Activated T-helper 1 cell treated with anti-CD3 and anti-CD28 coated beads, Interleukin-12 subunit alpha, Interleukin-12 subunit beta, Interleukin-2, Interleukin-4 antibody, amounts not matched to agents 30 ng/mL and 10 ng/mL and 1 ng/mL, durations not matched to agents 14 hours and 24 hours and 36 hours (primary cell): ENCODE measurements at regions of chr2 and their contacts with region 1.

Region 1: DNA sequence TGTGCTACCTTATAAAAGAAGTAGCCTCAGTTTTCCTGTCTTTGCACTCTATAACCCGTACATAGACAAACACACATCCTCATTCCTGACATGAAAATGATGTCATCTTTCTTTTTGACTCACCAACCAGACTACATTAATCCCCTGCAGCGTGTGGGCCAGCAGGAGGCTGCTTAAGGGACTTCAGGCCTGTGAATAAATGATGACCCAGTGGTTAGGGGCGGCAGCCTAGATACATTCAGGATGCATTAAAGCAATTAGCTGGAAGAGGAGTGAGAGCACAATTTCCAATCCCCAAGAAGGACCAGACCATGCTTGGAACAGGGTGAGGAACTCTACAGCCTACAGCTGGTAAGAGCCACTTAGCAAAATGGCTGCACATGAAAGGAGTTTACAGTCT is 57.3 kb upstream of the KLF7 start:
- DNase-seq: no peak
- H3K4me3 Mint-ChIP-seq: peak overlapping the region; percentile 60
- H3K27ac Mint-ChIP-seq: peak overlapping the region; percentile 84
- H3K4me1 Mint-ChIP-seq: peaks cover 46% of the 10 kb centered on the region
- H3K27me3 Mint-ChIP-seq: peaks cover 6% of the 10 kb centered on the region

Region 2: GRCh38 chr2:206800506-206801417 is 422.3 kb before region 1 on chr2:
- intact Hi-C with region 1: loop called (anchors 5 kb)
- DNase-seq: peak; percentile 28
- H3K4me3 Mint-ChIP-seq: peak overlapping the region; percentile 49
- H3K27ac Mint-ChIP-seq: peak overlapping the region; percentile 61
- H3K4me1 Mint-ChIP-seq: peaks cover 20% of the 10 kb centered on the region
- H3K27me3 Mint-ChIP-seq: no peaks in the 10 kb centered on the region

Region 3: DNA sequence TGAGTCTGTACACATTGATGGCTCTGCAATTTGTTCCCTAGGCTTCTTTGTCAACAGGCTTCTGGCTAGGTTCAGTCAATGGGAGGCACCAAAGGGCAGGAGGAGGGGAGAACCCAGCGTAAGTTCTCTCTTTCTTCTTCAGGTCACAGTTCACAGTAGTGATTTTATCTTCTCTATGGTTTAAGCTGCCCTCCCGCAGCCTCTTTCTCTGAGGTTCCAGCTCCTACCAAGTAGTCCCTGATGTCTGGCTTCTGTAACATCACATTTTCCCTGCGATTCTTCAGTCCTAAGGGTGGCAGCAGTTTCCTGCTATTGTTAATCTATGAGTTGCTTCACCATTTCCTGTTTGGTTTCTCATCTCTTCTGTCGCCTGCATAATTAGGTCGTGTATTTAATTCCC is 176.3 kb before region 1 on chr2:
- intact Hi-C with region 1: loop called (anchors 2 kb)
- DNase-seq: peak; percentile 6
- H3K4me3 Mint-ChIP-seq: no peak overlapping the region
- H3K27ac Mint-ChIP-seq: no peak overlapping the region
- H3K4me1 Mint-ChIP-seq: peaks cover 15% of the 10 kb centered on the region
- H3K27me3 Mint-ChIP-seq: peaks cover 2% of the 10 kb centered on the region

Region 4: DNA sequence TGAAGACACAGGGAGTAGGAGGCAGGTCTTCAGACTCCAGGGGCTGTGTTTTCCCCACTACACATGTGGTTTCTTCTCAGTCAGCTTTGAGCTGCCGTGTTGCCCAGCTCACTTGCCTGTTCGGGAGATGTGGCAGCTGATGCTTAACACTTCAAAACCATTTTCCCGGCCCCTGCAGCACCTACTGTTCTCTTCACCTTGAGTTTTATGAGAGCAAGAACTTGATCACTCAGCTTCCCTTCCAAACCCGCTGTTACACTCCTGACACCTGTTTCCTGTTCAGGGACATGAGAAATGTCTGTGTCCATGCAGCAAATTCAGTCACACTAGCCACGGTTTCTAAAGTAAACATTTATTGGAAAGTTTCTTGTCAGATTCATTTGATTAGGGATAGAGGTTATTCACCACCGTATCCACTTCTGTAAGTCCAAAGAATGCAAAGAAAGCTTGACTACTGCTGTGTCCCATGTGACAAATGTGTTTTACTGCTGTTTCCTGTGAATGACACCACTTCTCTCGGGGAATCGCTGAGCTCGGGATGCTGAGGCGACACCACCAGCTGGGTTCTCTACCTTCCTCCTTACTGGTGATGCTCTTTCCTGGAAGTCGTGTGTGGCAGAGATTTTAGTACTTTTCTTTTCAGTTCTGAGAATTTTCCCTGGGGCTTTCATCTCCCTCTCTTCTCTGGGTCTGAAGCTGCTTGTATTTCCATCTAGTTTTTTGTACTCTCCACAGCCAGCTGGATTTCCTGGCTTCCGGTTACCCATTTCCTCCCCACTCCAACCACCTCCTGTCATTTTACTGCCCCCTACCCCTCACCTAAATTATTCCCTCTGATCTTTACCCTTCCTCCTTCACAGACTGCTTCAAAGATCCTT is 149.0 kb before region 1 on chr2:
- intact Hi-C with region 1: loop called (anchors 2 kb)
- DNase-seq: peak; percentile 39
- H3K4me3 Mint-ChIP-seq: peak overlapping the region; percentile 71
- H3K27ac Mint-ChIP-seq: peak overlapping the region; percentile 79
- H3K4me1 Mint-ChIP-seq: peaks cover 46% of the 10 kb centered on the region
- H3K27me3 Mint-ChIP-seq: no peaks in the 10 kb centered on the region

Region 5: DNA sequence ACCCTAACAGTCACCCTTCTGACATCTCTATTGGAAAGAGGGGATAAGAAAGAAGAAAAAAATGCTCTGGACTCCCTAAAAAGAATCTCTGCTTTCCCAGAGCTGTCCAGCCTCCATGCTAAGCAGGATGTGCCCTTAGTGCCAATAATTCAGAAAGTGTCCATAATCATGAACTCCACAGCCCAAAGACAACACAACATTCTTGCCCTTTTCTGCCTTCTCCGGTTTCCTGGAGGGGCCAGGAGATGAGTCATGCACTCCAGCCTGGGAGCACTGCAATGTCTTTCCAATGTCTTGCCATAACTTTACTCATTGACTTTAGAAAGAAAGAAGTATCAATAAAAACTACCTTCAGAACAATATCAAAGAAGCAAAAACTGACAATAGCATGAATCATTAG is 101.3 kb before region 1 on chr2:
- intact Hi-C with region 1: loop called (anchors 1 kb)
- DNase-seq: no peak
- H3K4me3 Mint-ChIP-seq: no peak overlapping the region
- H3K27ac Mint-ChIP-seq: no peak overlapping the region
- H3K4me1 Mint-ChIP-seq: peaks cover 46% of the 10 kb centered on the region
- H3K27me3 Mint-ChIP-seq: no peaks in the 10 kb centered on the region

Region 6: DNA sequence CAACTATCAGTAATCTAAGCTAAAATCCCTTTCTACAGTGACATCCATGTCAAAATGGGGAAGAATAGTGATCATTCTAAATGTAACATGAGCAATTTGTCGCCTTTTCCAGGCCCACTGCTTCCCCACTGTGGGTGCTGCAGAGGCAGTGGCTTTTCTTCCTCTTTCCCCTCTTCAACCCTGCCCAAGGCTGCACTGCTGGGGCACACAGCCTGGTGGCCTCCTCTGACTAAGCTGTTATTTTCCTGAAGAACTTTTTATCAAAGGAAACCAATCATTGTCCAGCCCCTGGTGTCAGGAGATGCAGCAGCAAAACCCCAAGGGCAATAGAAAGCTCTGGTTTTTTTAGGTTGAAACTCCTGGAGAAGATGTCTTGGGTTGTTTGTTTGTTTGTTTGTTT is 60.3 kb after region 1 on chr2:
- intact Hi-C with region 1: loop called (anchors 1 kb)
- DNase-seq: no peak
- H3K4me3 Mint-ChIP-seq: peak overlapping the region; percentile 53
- H3K27ac Mint-ChIP-seq: peak overlapping the region; percentile 85
- H3K4me1 Mint-ChIP-seq: peaks cover 76% of the 10 kb centered on the region
- H3K27me3 Mint-ChIP-seq: no peaks in the 10 kb centered on the region

Region 7: DNA sequence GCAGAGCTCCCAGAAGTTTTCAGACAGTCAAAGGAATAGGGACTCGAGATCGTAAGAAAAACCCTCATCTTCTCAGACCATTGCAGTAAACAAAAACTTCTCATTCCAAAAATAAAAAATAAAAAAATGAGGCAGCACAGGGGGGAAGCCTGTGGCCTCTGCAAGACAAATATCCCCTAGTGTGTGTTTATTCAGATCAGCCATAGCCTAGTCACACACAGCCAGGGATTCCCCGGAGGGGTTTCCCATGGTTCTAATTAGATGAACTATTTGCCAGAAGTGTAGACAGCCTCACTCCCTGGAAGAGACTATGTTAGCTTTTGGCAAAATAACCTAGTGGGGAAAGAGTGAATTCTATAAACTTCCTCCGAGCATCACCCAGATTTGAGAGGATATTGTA is 65.6 kb after region 1 on chr2:
- intact Hi-C with region 1: loop called (anchors 2 kb)
- DNase-seq: no peak
- H3K4me3 Mint-ChIP-seq: no peak overlapping the region
- H3K27ac Mint-ChIP-seq: no peak overlapping the region
- H3K4me1 Mint-ChIP-seq: peaks cover 77% of the 10 kb centered on the region
- H3K27me3 Mint-ChIP-seq: no peaks in the 10 kb centered on the region

Region 8: DNA sequence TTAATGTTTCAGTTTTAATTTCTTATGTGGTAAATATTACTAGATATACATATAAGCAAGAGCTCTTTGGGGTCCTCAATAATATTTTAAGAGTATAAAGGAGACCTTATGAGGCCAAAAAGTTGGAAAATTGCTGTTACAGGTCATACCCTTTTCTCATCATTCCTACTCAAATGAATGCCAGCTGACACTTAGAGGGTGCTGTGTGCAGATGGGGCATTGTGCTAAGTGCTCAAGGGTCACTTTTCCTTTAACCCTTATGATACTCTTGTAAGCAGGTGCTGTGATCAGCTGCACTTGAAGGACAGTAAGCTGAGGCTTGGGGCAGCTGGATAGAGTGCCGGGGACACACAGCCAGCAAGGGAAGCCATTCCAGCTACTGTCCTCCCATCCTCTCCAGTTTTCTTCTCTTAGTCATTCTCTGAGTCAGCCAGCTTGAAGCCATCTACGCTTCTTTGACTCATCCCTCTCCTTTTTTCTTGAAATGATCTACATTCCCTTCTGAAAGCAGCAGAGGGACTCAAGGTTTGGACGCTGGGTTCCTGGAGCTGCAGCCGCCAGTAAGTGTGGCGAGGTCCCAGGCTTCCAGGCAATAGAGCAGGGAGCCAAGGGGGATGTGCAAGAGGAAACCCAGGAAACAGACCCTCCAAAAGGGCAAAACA is 264.7 kb after region 1 on chr2:
- intact Hi-C with region 1: no loop called
- DNase-seq: no peak
- H3K4me3 Mint-ChIP-seq: no peak overlapping the region
- H3K27ac Mint-ChIP-seq: no peak overlapping the region
- H3K4me1 Mint-ChIP-seq: peaks cover 6% of the 10 kb centered on the region
- H3K27me3 Mint-ChIP-seq: peaks cover 2% of the 10 kb centered on the region